Lower lobe of right lung (tissue), 2 donors: ENCODE measurements at regions of chr9 and their contacts with region 1.

Region 1: GRCh38 chr9:114108016-114108833 is 9.1 kb upstream of the KIF12 start:
- DNase-seq: peak; percentile 77
- ATAC-seq: peak; percentile 97 to 98
- H3K4me3 ChIP-seq: no peak overlapping the region
- H3K27ac ChIP-seq: no peak overlapping the region
- H3K4me1 ChIP-seq: peaks cover 2% of the 10 kb centered on the region
- H3K27me3 ChIP-seq: no peaks in the 10 kb centered on the region
- CTCF ChIP-seq: peak; percentile 92

Region 2: DNA sequence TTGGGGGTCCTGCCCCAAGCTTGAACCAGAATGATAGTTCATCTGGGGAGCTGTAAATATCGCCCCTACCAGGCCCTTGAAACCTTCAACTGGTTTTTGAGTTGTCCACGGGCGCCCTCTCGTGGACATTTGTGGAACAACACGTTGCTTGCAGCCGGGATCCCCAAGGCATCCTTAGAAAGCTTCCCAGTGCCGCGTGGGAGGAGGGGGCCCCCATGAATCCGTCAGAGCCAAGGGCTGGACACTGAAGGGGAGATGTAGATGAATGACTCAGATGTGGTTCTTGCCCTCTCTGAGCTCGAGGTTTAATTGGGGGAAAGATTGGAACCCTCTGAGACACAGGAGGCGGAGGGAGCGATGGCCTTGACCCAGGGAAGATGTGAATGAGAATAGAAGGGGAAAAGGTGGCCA is 182.8 kb after region 1 on chr9:
- intact Hi-C with region 1: loop called (anchors 10 kb)
- DNase-seq: peak; percentile 77
- ATAC-seq: peak; percentile 65 to 69
- H3K4me3 ChIP-seq: no peak overlapping the region
- H3K27ac ChIP-seq: no peak overlapping the region
- H3K4me1 ChIP-seq: no peaks in the 10 kb centered on the region
- H3K27me3 ChIP-seq: no peaks in the 10 kb centered on the region
- CTCF ChIP-seq: peak; percentile 98